PC-3 (cell line): ENCODE measurements at regions of chr20 and their contacts with region 1.

Region 1: DNA sequence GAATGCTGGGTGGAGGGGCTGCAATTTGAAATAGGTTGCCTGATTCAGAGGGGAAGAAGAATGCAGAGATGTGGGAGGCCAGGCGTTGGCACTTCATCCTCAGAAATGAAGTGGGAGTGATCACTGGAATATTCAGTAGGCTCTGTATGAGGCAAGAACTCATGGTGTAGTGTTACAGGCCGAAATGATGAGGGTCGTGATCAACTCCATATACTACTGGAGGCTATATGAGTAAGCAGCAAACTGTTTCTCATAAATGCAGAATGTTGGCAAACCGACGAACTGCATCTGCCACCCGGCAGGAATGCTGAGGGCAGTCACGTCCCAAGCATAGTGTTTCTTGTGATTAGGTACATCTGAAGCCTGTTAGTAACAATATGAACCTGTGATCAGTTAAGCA is 12.7 kb downstream of the KCNS1 start:
- DNase-seq: peak; percentile 99
- ATAC-seq: peak; percentile 97
- H3K4me3 ChIP-seq: peak overlapping the region; percentile 14; the same call in 1 of the 2 replicates
- H3K27ac ChIP-seq: peak overlapping the region; percentile 88
- H3K4me1 ChIP-seq: peaks cover 28% of the 10 kb centered on the region
- H3K27me3 ChIP-seq: no peaks in the 10 kb centered on the region
- CTCF ChIP-seq: no peak

Region 2: DNA sequence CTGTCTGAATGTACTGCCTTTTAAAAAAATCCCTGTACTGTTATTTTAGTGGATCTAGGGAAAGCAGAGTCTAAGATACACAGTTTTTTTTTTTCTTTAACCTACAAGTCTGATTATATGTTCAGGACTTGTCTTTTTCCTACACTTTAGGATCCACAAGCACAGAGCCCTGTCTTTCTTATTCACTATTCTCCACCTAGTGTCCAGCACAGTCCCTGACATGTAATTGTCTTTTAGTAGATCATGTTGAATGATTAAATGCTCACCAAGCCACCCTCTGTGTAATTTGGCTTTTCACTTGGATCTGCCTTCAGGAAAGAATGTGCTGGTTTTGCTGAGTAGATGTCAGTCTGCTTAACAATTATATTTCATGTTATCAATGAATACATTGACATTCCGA is 238.5 kb before region 1 on chr20:
- CTCF ChIA-PET with region 1: no interaction called
- POLR2A ChIA-PET with region 1: no interaction called
- intact Hi-C with region 1: no loop called
- DNase-seq: no peak
- ATAC-seq: no peak; the same call in 1 of the 2 replicates
- H3K4me3 ChIP-seq: no peak overlapping the region
- H3K27ac ChIP-seq: no peak overlapping the region
- H3K4me1 ChIP-seq: no peaks in the 10 kb centered on the region
- H3K27me3 ChIP-seq: peaks cover 60% of the 10 kb centered on the region
- CTCF ChIP-seq: peak; percentile 30; the same call in 1 of the 2 replicates

Region 3: GRCh38 chr20:45061244-45061643 is 27.0 kb before region 1 on chr20:
- CTCF ChIA-PET with region 1: no interaction called
- POLR2A ChIA-PET with region 1: no interaction called
- intact Hi-C with region 1: loop called (anchors 1 kb)
- DNase-seq: peak; percentile 96
- ATAC-seq: peak; percentile 93
- H3K4me3 ChIP-seq: 0 out of 2 replicates have a peak overlapping the region, but pooled peaks have one; percentile 7
- H3K27ac ChIP-seq: peak overlapping the region; percentile 57
- H3K4me1 ChIP-seq: peaks cover 52% of the 10 kb centered on the region
- H3K27me3 ChIP-seq: no peaks in the 10 kb centered on the region
- CTCF ChIP-seq: no peak